ENCODE measurements at regions of chr15 and their contacts with region 1.

Region 1: DNA sequence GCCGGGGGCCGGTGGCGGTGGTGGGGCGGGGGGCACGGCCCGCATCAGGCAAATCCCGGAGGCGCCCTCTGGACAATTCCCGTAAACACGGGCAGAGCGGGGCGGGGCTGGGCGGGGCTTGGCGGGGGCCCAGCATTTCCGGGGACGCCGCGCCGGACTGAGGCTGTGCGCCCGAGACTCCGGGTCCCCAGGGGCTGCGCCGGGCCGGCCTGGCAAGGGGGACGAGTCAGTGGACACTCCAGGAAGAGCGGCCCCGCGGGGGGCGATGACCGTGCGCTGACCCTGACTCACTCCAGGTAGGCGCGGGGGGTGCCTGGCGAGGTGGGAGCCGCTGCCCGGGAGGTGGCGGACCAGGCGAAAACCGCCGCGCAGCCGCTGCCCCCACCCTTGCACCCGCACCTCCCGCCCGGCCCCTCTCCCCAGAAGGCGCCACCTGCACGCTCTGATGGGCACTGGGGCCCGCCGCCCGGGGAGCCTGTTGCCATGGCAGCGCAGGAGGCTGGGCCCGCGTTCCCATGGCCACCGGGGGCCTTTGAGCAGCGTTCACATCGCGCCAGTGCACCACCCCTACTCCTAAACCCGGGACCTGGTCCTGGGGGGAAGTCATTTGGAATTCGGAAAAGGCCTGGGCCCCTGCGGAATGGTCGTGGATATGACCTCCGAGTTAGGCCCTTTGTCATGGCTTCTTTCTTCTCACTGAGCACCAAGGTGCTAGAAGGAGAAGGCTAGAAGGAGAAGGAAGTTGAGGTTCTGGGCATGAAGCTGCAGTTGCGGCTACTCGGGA is 16.2 kb upstream of the SEMA4B start:
- DNase-seq: no peak
- ATAC-seq: peak; percentile 80
- H3K4me3 ChIP-seq: peak overlapping the region; percentile 71 to 83
- H3K27ac ChIP-seq: peak overlapping the region; percentile 80
- H3K4me1 ChIP-seq: peaks cover 17 to 47% of the 10 kb centered on the region in 2 experiments; a peak in 3 of 4 replicates
- H3K27me3 ChIP-seq: no peaks in the 10 kb centered on the region
- CTCF ChIP-seq: no peak
- POLR2A ChIP-seq: no peak
- RAD21 ChIP-seq: no peak

Region 2: DNA sequence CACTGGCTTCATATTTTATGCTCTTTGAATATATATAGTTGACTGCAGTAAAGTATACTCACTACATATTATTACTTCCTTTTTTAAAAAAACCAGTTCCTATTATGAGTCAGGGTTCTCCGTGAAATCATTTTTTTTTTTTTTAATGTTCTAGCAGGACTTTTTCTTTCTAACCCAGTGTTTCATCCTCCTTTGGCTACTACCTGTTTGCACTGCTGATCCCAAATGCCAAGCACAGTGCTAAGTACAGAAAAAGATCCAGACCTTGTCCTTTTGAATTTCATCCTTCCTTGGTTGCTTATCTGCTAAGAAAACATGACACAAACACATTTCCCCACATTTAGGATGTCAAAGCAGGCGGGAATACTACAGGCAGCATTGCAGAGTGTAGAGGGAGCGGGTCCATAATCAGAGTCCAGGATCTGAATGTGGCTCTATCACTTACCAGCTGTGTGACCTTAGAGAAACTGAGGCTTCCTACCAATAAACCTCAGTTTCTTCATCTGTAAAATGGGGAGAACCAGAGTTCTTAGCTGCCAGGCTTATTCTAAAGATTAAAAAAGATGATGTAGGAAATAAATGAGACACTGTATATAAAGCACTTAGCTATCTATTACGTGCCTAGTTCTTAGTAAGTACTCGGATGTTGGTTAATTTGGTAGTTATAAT is 333.2 kb before region 1 on chr15:
- CTCF ChIA-PET with region 1: no interaction called
- POLR2A ChIA-PET with region 1: no interaction called
- RAD21 ChIA-PET with region 1: no interaction called
- intact Hi-C with region 1: no loop called
- DNase-seq: no peak
- ATAC-seq: no peak
- H3K4me3 ChIP-seq: no peak overlapping the region; a peak in 1 of 4 replicates
- H3K27ac ChIP-seq: peak overlapping the region; percentile 29; the same call in 1 of the 2 replicates
- H3K4me1 ChIP-seq: peaks cover 28 to 61% of the 10 kb centered on the region in 2 experiments
- H3K27me3 ChIP-seq: no peaks in the 10 kb centered on the region
- CTCF ChIP-seq: no peak
- POLR2A ChIP-seq: no peak
- RAD21 ChIP-seq: no peak

Region 3: DNA sequence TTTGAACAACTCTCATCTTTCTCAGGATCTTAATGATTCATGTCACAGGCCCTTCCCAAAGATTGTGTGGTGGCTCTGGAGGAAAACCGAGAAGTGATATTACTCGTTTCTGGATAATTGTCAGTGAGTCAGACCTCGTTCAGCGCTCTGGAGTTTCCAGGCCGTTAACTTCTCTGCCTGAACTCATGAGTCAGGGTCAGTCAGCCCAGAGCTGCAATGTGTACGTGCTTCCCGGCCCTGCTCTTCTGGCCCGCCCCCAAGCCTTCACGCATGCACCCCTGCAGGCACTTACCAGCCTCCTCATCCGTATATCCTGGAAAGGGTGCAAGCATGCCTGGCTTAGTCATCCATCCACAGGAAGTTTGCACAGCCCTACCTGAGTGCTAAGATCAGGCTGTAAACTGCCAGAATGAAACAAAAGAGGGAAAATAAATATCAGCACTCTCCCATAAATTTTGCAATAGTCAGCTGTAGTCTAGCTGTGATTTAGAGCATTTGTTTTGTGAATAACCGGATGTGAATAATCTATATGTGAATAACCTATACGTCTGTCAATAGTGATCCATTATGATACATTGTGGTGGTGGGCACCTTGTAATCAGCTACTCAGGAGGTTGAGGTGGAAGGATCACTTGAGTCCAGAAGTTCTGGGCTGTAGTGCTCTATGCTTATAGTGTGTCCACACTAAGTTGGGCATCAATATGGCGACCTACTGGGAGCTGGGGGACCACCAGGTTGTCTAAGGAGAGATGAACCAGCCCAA is 19.1 kb before region 1 on chr15:
- CTCF ChIA-PET with region 1: no interaction called
- POLR2A ChIA-PET with region 1: interaction called, 4 read pairs
- RAD21 ChIA-PET with region 1: interaction called in 1 of 2 experiments, 3 read pairs
- intact Hi-C with region 1: loop called (anchors 1 kb)
- DNase-seq: peak; percentile 98
- ATAC-seq: peak; percentile 98
- H3K4me3 ChIP-seq: peak overlapping the region in 1 of 2 experiments; percentile 32; a peak in 3 of 4 replicates
- H3K27ac ChIP-seq: peak overlapping the region; percentile 90
- H3K4me1 ChIP-seq: peaks cover 31 to 74% of the 10 kb centered on the region in 2 experiments
- H3K27me3 ChIP-seq: no peaks in the 10 kb centered on the region
- CTCF ChIP-seq: no peak
- POLR2A ChIP-seq: no peak
- RAD21 ChIP-seq: no peak

Region 4: GRCh38 chr15:90201130-90201949 is 16.4 kb after region 1 on chr15 and contains the start of gene SEMA4B:
- CTCF ChIA-PET with region 1: interaction called, 4 read pairs
- POLR2A ChIA-PET with region 1: interaction called, 4 read pairs
- RAD21 ChIA-PET with region 1: no interaction called
- intact Hi-C with region 1: loop called (anchors 2 kb)
- DNase-seq: no peak
- ATAC-seq: peak; percentile 88
- H3K4me3 ChIP-seq: peak within 1 kb of the TSS; percentile 84 to 97
- H3K27ac ChIP-seq: peak within 1 kb of the TSS; percentile 82
- H3K4me1 ChIP-seq: peaks cover 18 to 54% of the 10 kb centered on the region in 2 experiments; a peak in 3 of 4 replicates
- H3K27me3 ChIP-seq: no peaks in the 10 kb centered on the region
- CTCF ChIP-seq: no peak
- POLR2A ChIP-seq: peak; percentile 54
- RAD21 ChIP-seq: no peak
- total RNA-seq, gene SEMA4B: 98.6 TPM

Region 5: GRCh38 chr15:90214553-90215196 is 29.7 kb after region 1 on chr15:
- CTCF ChIA-PET with region 1: interaction called, 5 read pairs
- POLR2A ChIA-PET with region 1: no interaction called
- RAD21 ChIA-PET with region 1: interaction called in 1 of 2 experiments, 3 read pairs
- intact Hi-C with region 1: loop called (anchors 2 kb)
- DNase-seq: no peak
- ATAC-seq: no peak
- H3K4me3 ChIP-seq: no peak overlapping the region
- H3K27ac ChIP-seq: peak overlapping the region; percentile 99
- H3K4me1 ChIP-seq: peaks cover 53 to 67% of the 10 kb centered on the region in 2 experiments
- H3K27me3 ChIP-seq: no peaks in the 10 kb centered on the region
- CTCF ChIP-seq: peak in 2 of 3 experiments; percentile 51 to 54; a peak in 4 of 6 replicates
- POLR2A ChIP-seq: no peak
- RAD21 ChIP-seq: no peak

Measured in HCT116 (cell line).